Ovary (tissue), 10 donors: ENCODE measurements at regions of chr11 and their contacts with region 1.

Region 1: GRCh38 chr11:75338516-75339208 is 12.8 kb downstream of the ARRB1 start:
- DNase-seq: peak in 1 of 5 donors; percentile 42
- H3K4me3 ChIP-seq: no peak overlapping the region
- H3K27ac ChIP-seq: peak overlapping the region; percentile 26 to 72
- H3K4me1 ChIP-seq: peaks cover 49% of the 10 kb centered on the region
- H3K27me3 ChIP-seq: no peaks in the 10 kb centered on the region
- CTCF ChIP-seq: no peak
- EP300 ChIP-seq: no peak
- POLR2A ChIP-seq: no peak

Region 2: GRCh38 chr11:74592441-74593362 is 746.0 kb before region 1 on chr11 and contains the start of gene POLD3:
- intact Hi-C with region 1: no loop called
- DNase-seq: peak; percentile 92 to 96 (median 93)
- H3K4me3 ChIP-seq: peak within 1 kb of the TSS; percentile 96
- H3K27ac ChIP-seq: peak within 1 kb of the TSS in 1 of 2 donors; percentile 59
- H3K4me1 ChIP-seq: peaks cover 1% of the 10 kb centered on the region
- H3K27me3 ChIP-seq: no peaks in the 10 kb centered on the region
- CTCF ChIP-seq: no peak
- EP300 ChIP-seq: no peak
- POLR2A ChIP-seq: peak; percentile 38
- total RNA-seq, gene POLD3: 8.5 to 19.0 (median 17.0) TPM

Region 3: GRCh38 chr11:75371941-75372789 is 33.5 kb after region 1 on chr11:
- intact Hi-C with region 1: loop called in 1 of 4 experiments (anchors 1 kb)
- DNase-seq: no peak
- H3K4me3 ChIP-seq: no peak overlapping the region
- H3K27ac ChIP-seq: no peak overlapping the region
- H3K4me1 ChIP-seq: no peaks in the 10 kb centered on the region
- H3K27me3 ChIP-seq: no peaks in the 10 kb centered on the region
- CTCF ChIP-seq: no peak
- EP300 ChIP-seq: no peak
- POLR2A ChIP-seq: no peak